Activated CD4-positive, alpha-beta memory T cell treated with anti-CD3 and anti-CD28 coated beads for 36 hours (primary cell): ENCODE measurements at regions of chr6 and their contacts with region 1.

Region 1: GRCh38 chr6:154675602-154676088 is 57.6 kb upstream of the SCAF8 start:
- DNase-seq: peak; percentile 93
- H3K4me3 Mint-ChIP-seq: no peak overlapping the region
- H3K27ac Mint-ChIP-seq: no peak overlapping the region
- H3K4me1 Mint-ChIP-seq: no peaks in the 10 kb centered on the region
- H3K27me3 Mint-ChIP-seq: no peaks in the 10 kb centered on the region

Region 2: GRCh38 chr6:154606457-154606856 is 69.2 kb before region 1 on chr6:
- CTCF ChIA-PET with region 1: interaction called, 5 read pairs
- POLR2A ChIA-PET with region 1: no interaction called
- intact Hi-C with region 1: loop called (anchors 2 kb)
- DNase-seq: peak; percentile 96
- H3K4me3 Mint-ChIP-seq: peak overlapping the region; percentile 24
- H3K27ac Mint-ChIP-seq: peak overlapping the region; percentile 67
- H3K4me1 Mint-ChIP-seq: peaks cover 43% of the 10 kb centered on the region
- H3K27me3 Mint-ChIP-seq: peaks cover 4% of the 10 kb centered on the region

Region 3: DNA sequence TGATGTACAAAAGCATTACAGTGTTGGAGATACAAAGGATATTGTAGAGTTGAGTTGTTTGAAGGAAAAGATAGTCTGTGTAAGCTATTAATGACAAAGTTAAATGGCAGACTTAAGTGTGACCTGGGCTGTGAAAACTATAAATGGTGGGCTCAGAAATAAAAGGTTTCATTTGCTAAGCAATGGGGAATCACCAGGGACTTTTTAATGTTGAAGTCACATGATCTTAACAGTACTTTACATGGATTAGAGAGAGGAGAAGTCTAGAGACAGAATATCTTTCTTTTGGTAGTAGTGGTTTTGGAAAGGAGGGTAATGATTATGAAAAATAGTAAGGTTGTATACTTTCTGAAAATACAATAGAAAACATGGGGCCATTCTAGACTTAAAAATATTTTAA is 124.7 kb after region 1 on chr6:
- CTCF ChIA-PET with region 1: interaction called, 212 read pairs
- POLR2A ChIA-PET with region 1: no interaction called
- intact Hi-C with region 1: loop called (anchors 1 kb)
- DNase-seq: no peak
- H3K4me3 Mint-ChIP-seq: no peak overlapping the region
- H3K27ac Mint-ChIP-seq: peak overlapping the region; percentile 35
- H3K4me1 Mint-ChIP-seq: peaks cover 20% of the 10 kb centered on the region
- H3K27me3 Mint-ChIP-seq: no peaks in the 10 kb centered on the region

Region 4: GRCh38 chr6:154852687-154853086 is 177.0 kb after region 1 on chr6:
- CTCF ChIA-PET with region 1: interaction called, 10 read pairs
- POLR2A ChIA-PET with region 1: no interaction called
- intact Hi-C with region 1: no loop called
- DNase-seq: no peak
- H3K4me3 Mint-ChIP-seq: no peak overlapping the region
- H3K27ac Mint-ChIP-seq: no peak overlapping the region
- H3K4me1 Mint-ChIP-seq: peaks cover 9% of the 10 kb centered on the region
- H3K27me3 Mint-ChIP-seq: no peaks in the 10 kb centered on the region

Region 5: GRCh38 chr6:154928325-154928922 is 252.8 kb after region 1 on chr6:
- CTCF ChIA-PET with region 1: interaction called, 19 read pairs
- POLR2A ChIA-PET with region 1: no interaction called
- intact Hi-C with region 1: loop called (anchors 1 kb)
- DNase-seq: peak; percentile 77
- H3K4me3 Mint-ChIP-seq: no peak overlapping the region
- H3K27ac Mint-ChIP-seq: no peak overlapping the region
- H3K4me1 Mint-ChIP-seq: peaks cover 9% of the 10 kb centered on the region
- H3K27me3 Mint-ChIP-seq: no peaks in the 10 kb centered on the region